Left ventricle myocardium inferior (tissue), 1 donor: ENCODE measurements at regions of chr3 and their contacts with region 1.

Region 1: GRCh38 chr3:115325539-115325938 is 178.5 kb upstream of the ZBTB20 start:
- DNase-seq: no peak
- H3K4me3 ChIP-seq: no peak overlapping the region
- H3K27ac ChIP-seq: no peak overlapping the region
- H3K4me1 ChIP-seq: no peaks in the 10 kb centered on the region
- H3K27me3 ChIP-seq: no peaks in the 10 kb centered on the region
- CTCF ChIP-seq: no peak

Region 2: DNA sequence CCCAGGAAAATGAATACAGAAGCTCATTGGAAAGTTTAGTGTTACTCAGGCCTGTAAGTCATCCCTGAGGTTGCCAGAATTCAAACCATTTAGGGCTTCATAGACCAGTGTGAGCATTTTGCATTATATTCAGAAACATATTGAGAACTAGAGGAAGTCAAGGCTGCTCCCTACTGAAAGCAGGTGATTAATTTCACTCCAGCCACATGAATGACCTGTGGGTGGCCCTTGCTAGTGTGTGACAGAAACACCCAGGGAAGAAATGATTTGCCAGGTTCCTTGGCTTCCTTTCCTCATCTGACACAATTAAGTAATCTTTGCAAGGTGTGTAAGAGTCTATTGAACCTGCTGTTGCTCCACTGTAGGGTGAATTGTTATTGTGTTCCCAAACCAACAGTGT is 359.6 kb after region 1 on chr3:
- intact Hi-C with region 1: loop called (anchors 10 kb)
- DNase-seq: no peak
- H3K4me3 ChIP-seq: no peak overlapping the region
- H3K27ac ChIP-seq: no peak overlapping the region
- H3K4me1 ChIP-seq: peaks cover 10% of the 10 kb centered on the region
- H3K27me3 ChIP-seq: no peaks in the 10 kb centered on the region
- CTCF ChIP-seq: no peak